Activated CD4-positive, alpha-beta T cell treated with anti-CD3 and anti-CD28 coated beads, Interleukin-2, amount 10 ng/mL, durations not matched to agents 24 days and 14 days (primary cell): ENCODE measurements at regions of chr11 and their contacts with region 1.

Region 1: GRCh38 chr11:76807206-76807875 is 24.2 kb downstream of the TSKU start:
- DNase-seq: peak; percentile 90
- H3K4me3 Mint-ChIP-seq: peak overlapping the region; percentile 30
- H3K27ac Mint-ChIP-seq: no peak overlapping the region
- H3K4me1 Mint-ChIP-seq: peaks cover 47% of the 10 kb centered on the region
- H3K27me3 Mint-ChIP-seq: peaks cover 15% of the 10 kb centered on the region

Region 2: DNA sequence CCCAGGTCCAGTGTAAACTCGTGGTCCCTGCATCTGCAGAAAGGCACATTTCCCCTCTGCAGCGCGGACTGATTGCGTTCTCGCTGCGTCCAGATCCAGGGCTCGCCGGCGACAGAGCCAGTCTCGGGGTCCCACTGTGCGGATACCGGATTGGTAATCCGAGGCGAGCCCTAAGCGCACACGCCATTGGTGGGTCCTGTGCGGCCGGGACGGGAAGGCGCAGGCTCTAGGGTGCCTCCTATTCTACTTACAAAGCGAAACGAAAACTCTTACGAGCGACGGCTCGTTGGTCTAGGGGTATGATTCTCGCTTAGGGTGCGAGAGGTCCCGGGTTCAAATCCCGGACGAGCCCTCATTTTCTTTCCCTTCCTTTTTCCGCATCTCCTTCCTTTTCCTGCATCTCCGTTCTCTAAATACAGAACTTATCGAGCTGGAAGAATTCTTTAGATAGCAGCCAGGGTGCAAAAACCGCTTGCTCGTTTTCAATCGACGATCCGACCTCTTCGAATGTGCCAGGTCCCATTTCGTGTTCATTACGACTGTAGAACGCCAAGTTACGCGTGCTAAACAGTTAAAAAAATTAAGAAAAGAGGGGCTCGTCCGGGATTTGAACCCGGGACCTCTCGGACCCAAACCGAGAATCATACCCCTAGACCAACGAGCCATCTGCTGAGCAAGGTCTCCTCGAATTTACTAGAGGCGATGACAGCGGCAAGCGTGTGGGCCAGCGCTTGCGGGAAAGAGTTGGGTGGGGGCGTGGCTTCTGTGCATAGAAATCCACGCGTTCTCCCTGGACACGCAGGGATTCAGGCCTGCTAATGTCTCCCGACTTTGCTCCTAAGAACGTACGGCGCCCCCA is 571.9 kb before region 1 on chr11:
- intact Hi-C with region 1: loop called (anchors 10 kb)
- DNase-seq: peak; percentile 98
- H3K4me3 Mint-ChIP-seq: peak overlapping the region; percentile 96
- H3K27ac Mint-ChIP-seq: peak overlapping the region; percentile 96
- H3K4me1 Mint-ChIP-seq: peaks cover 48% of the 10 kb centered on the region
- H3K27me3 Mint-ChIP-seq: peaks cover 13% of the 10 kb centered on the region

Region 3: GRCh38 chr11:76744186-76745043 is 62.9 kb before region 1 on chr11:
- intact Hi-C with region 1: no loop called
- DNase-seq: no peak
- H3K4me3 Mint-ChIP-seq: no peak overlapping the region
- H3K27ac Mint-ChIP-seq: no peak overlapping the region
- H3K4me1 Mint-ChIP-seq: peaks cover 4% of the 10 kb centered on the region
- H3K27me3 Mint-ChIP-seq: peaks cover 12% of the 10 kb centered on the region

Region 4: GRCh38 chr11:76782526-76783293 is 24.6 kb before region 1 on chr11:
- intact Hi-C with region 1: loop called (anchors 1 kb)
- DNase-seq: peak; percentile 87
- H3K4me3 Mint-ChIP-seq: peak overlapping the region; percentile 82
- H3K27ac Mint-ChIP-seq: peak overlapping the region; percentile 88
- H3K4me1 Mint-ChIP-seq: peaks cover 31% of the 10 kb centered on the region
- H3K27me3 Mint-ChIP-seq: peaks cover 59% of the 10 kb centered on the region

Region 5: GRCh38 chr11:76919887-76920746 is 112.8 kb after region 1 on chr11:
- intact Hi-C with region 1: loop called (anchors 1 kb)
- DNase-seq: peak; percentile 91
- H3K4me3 Mint-ChIP-seq: peak overlapping the region; percentile 34
- H3K27ac Mint-ChIP-seq: no peak overlapping the region
- H3K4me1 Mint-ChIP-seq: peaks cover 6% of the 10 kb centered on the region
- H3K27me3 Mint-ChIP-seq: peaks cover 7% of the 10 kb centered on the region

Region 6: GRCh38 chr11:77091146-77091940 is 284.0 kb after region 1 on chr11:
- intact Hi-C with region 1: loop called (anchors 2 kb)
- DNase-seq: peak; percentile 94
- H3K4me3 Mint-ChIP-seq: no peak overlapping the region
- H3K27ac Mint-ChIP-seq: no peak overlapping the region
- H3K4me1 Mint-ChIP-seq: peaks cover 5% of the 10 kb centered on the region
- H3K27me3 Mint-ChIP-seq: no peaks in the 10 kb centered on the region